ENCODE measurements at regions of chr12 and their contacts with region 1.

Region 1: DNA sequence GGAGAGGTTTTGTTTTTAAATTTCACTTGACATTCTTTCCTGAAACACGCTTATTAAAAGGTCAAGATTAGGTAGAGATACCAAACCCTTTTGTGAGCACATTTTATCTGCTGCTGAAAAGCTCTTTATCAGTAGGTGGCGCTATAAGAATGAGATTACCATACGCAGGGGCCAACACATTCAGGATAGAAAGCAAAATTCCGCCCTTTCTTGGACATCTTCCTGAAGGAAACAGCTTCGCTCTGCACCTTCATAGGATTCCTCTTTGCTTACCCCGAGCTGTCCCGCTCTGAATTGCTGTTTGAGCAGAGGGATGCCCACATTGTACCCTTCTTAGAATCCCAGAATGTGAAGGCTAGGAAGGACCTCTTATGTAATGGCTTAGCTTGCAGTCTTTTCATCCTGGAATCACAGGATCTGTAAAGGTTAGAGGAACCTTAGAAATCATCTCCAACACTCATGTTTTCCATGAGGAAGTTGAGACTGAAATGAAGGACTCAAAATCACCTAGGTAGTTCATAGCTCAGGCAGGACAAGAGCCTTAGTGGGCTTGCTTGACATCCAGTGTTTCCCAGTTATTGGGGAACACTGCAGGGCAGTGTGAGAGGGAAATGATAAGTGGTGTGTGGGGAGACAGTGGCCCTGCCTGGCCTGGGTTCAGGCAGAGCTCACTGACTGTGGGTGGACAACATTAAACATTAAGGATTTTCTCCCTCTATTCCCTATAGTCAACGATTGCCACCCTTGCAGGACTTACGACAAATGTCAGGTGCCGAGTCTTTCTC is 38.7 kb upstream of the CRY1 start:
- DNase-seq: peak; percentile 17
- ATAC-seq: peak; percentile 48
- H3K4me3 Mint-ChIP-seq: no peak overlapping the region
- H3K27ac Mint-ChIP-seq: no peak overlapping the region
- H3K4me1 Mint-ChIP-seq: peaks cover 4% of the 10 kb centered on the region
- H3K27me3 Mint-ChIP-seq: no peaks in the 10 kb centered on the region
- CTCF ChIP-seq: peak; percentile 85

Region 2: GRCh38 chr12:107007411-107007810 is 124.6 kb before region 1 on chr12:
- CTCF ChIA-PET with region 1: no interaction called
- POLR2A ChIA-PET with region 1: no interaction called
- intact Hi-C with region 1: no loop called
- DNase-seq: no peak
- ATAC-seq: no peak
- H3K4me3 Mint-ChIP-seq: no peak overlapping the region
- H3K27ac Mint-ChIP-seq: no peak overlapping the region
- H3K4me1 Mint-ChIP-seq: no peaks in the 10 kb centered on the region
- H3K27me3 Mint-ChIP-seq: no peaks in the 10 kb centered on the region
- CTCF ChIP-seq: no peak

Region 3: DNA sequence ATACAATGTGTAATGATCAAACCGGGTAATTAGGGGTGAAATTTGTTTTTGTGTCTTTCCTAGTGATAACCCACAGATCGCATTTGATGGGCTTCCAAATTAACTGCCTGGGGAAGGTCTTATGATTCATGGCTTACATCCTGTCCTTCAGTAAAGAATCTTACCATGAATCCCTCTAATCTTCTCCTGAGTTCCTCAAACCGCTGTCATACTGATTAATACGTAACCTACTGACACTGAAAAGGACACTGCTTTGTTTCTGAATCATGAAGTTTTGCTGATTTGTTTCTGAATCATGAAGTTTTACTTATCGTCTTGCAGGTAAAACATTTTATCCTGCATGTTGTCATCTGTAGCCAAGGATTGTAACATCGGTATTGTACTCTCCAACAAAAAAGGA is 13.4 kb after region 1 on chr12:
- CTCF ChIA-PET with region 1: interaction called, 34 read pairs
- POLR2A ChIA-PET with region 1: interaction called, 3 read pairs
- intact Hi-C with region 1: no loop called
- DNase-seq: no peak
- ATAC-seq: no peak
- H3K4me3 Mint-ChIP-seq: no peak overlapping the region
- H3K27ac Mint-ChIP-seq: no peak overlapping the region
- H3K4me1 Mint-ChIP-seq: no peaks in the 10 kb centered on the region
- H3K27me3 Mint-ChIP-seq: no peaks in the 10 kb centered on the region
- CTCF ChIP-seq: no peak

Region 4: GRCh38 chr12:107236824-107237511 is 104.9 kb after region 1 on chr12:
- CTCF ChIA-PET with region 1: interaction called, 12 read pairs
- POLR2A ChIA-PET with region 1: no interaction called
- intact Hi-C with region 1: no loop called
- DNase-seq: no peak
- ATAC-seq: peak; percentile 27
- H3K4me3 Mint-ChIP-seq: no peak overlapping the region
- H3K27ac Mint-ChIP-seq: no peak overlapping the region
- H3K4me1 Mint-ChIP-seq: peaks cover 13% of the 10 kb centered on the region
- H3K27me3 Mint-ChIP-seq: no peaks in the 10 kb centered on the region
- CTCF ChIP-seq: no peak

Region 5: GRCh38 chr12:107317751-107318613 is 186.0 kb after region 1 on chr12:
- CTCF ChIA-PET with region 1: interaction called, 13 read pairs
- POLR2A ChIA-PET with region 1: interaction called, 3 read pairs
- intact Hi-C with region 1: no loop called
- DNase-seq: peak; percentile 94
- ATAC-seq: peak; percentile 62
- H3K4me3 Mint-ChIP-seq: peak overlapping the region; percentile 90
- H3K27ac Mint-ChIP-seq: no peak overlapping the region
- H3K4me1 Mint-ChIP-seq: peaks cover 33% of the 10 kb centered on the region
- H3K27me3 Mint-ChIP-seq: peaks cover 12% of the 10 kb centered on the region
- CTCF ChIP-seq: peak; percentile 61

Region 6: DNA sequence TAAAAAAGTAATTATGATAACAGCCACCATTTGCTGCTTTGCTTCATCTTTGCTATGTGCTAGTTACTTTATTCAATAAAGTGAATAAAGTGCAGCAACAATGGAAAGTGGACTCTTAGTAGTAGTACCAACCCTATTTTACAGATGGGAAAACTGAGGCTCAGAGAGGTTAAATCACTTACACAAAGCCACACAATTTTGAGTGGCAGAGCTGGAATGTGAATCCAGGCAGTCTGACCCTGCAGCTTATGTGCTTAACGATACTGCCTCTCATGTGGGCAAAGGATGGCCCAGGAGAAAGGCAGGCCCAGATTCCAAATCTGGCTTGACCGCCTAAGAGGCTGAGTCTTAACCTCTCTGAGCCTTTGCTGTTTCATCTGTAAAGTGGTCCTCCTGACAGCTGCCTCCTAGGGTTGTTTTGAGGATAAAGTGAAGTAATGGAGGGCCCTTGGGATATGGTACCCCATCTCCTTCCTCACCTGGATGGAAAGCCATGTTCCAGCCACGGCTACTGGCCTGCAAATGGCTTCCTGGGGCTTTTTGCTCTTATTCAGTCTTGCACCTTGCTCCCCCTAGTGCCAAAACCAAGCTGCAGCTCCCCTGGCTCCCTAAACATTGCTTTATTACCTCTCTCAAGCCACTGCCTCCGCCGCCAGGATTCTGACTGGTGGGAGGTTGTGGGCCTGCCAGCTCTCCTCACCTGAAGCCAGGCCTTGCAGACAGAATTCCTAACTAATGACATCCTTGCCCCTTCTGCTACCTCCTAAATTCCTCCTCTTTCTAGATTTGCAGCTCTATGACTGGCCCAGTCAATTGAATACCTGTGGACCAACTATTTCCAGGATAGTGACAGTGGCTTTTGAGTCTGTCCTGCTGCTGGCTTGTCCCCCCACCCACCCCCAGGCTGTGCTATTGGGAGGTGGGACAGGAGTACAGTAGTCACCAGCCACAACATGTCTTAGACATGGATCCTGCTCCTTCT is 270.3 kb after region 1 on chr12:
- CTCF ChIA-PET with region 1: interaction called, 134 read pairs
- POLR2A ChIA-PET with region 1: no interaction called
- intact Hi-C with region 1: loop called (anchors 2 kb)
- DNase-seq: peak; percentile 84
- ATAC-seq: peak; percentile 81
- H3K4me3 Mint-ChIP-seq: no peak overlapping the region
- H3K27ac Mint-ChIP-seq: no peak overlapping the region
- H3K4me1 Mint-ChIP-seq: peaks cover 38% of the 10 kb centered on the region
- H3K27me3 Mint-ChIP-seq: no peaks in the 10 kb centered on the region
- CTCF ChIP-seq: peak; percentile 76

Region 7: DNA sequence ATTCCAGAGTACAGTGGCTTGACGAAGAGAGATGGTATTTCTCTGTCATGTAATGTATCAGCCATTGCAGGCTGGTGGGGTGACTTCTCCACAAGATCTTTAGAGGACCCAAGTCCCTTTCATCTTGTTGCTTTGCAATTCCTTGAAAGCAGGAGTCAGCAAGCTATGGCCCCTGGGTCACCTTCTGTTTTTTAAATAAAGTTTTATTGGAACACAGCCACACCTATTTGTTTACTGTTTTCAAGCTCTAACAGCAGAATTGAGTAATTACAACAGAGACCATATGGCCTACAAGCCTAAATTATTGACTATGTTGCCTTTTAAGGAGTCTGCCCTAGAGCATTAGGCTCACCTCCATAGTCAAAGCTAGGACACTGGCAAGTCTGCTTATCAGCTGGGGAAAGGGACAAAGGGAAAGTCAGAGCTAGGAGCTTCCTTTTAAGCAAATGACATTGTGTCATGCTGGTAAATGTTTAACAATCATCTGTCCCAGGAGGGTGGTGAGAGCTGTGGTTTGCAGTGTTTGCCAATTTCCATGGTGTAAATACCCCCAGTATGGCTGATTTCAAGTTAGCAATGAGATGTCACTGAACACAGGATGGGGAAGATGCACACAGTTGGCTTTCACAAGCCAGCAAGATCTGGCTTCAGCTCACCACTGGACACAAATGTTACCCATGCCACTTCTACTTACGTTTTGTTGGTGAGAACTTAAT is 465.8 kb after region 1 on chr12:
- CTCF ChIA-PET with region 1: interaction called, 19 read pairs
- POLR2A ChIA-PET with region 1: no interaction called
- intact Hi-C with region 1: no loop called
- DNase-seq: no peak
- ATAC-seq: no peak
- H3K4me3 Mint-ChIP-seq: no peak overlapping the region
- H3K27ac Mint-ChIP-seq: no peak overlapping the region
- H3K4me1 Mint-ChIP-seq: no peaks in the 10 kb centered on the region
- H3K27me3 Mint-ChIP-seq: no peaks in the 10 kb centered on the region
- CTCF ChIP-seq: no peak

Region 8: DNA sequence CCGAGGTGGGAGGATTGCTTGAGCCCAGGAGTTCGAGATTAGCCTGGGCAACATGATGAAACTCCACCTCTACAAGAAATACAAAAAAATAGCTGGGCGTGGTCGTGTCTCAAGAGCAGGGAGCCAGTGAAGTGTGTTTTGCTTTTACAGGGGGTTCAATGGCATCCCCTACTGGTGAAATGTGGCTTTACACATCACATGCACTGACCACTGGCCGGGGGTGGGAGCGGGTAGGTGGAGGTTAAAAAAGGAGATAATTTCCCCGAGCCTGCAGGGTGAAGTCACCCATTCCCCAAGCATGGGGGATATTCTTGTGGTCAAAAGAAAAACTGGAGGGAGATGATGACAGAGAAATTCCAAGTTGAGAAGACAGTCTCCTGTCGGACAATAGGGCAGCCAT is 490.0 kb after region 1 on chr12:
- CTCF ChIA-PET with region 1: interaction called, 235 read pairs
- POLR2A ChIA-PET with region 1: no interaction called
- intact Hi-C with region 1: no loop called
- DNase-seq: peak; percentile 30
- ATAC-seq: peak; percentile 37
- H3K4me3 Mint-ChIP-seq: no peak overlapping the region
- H3K27ac Mint-ChIP-seq: no peak overlapping the region
- H3K4me1 Mint-ChIP-seq: no peaks in the 10 kb centered on the region
- H3K27me3 Mint-ChIP-seq: no peaks in the 10 kb centered on the region
- CTCF ChIP-seq: peak; percentile 70